GM12878 (cell line): ENCODE measurements at regions of chr4 and their contacts with region 1.

Region 1: DNA sequence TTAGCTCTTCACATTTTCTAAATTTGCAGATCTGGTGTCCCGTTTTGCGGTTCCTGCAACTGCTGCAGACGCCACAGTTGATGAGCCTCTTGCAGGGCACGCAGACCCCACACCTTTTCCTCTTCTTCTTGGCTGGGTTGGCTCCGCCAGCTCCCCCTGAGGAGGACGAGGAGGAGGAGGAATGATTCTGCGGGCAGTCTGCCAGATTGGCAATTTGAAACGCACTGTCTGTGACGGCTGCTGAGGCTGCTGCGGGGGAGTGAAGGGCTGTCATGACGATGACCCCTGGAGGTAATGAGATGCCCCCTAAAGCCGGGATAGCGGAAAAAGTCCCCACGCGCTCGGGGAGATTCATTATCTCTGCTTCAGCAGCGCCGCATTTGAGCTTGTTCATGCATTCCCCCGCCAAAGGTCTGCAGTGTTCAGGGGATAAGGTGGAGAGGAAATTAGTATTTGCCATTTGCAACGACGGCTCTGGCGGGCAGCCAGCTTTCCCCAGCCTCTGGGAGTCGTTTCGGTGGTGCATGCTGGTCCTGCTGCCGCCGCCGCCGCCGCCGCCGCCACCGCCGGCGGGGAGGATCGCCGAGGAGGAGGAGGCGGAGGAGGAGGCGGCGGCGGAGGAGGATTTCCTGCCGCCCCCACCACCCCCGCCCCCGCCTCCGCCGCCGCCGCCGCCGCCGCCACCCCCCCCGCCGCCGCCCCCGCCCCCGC is 3.8 kb downstream of the CXXC4 start:
- DNase-seq: no peak
- ATAC-seq: peak; percentile 7
- H3K4me3 ChIP-seq: peak overlapping the region; percentile 78
- H3K27ac ChIP-seq: peak overlapping the region; percentile 97
- H3K4me1 ChIP-seq: peaks cover 16% of the 10 kb centered on the region
- H3K27me3 ChIP-seq: no peaks in the 10 kb centered on the region
- CTCF ChIP-seq: no peak
- EP300 ChIP-seq: no peak
- POLR2A ChIP-seq: peak; percentile 63
- RAD21 ChIP-seq: no peak

Region 2: GRCh38 chr4:104064646-104065577 is 426.0 kb before region 1 on chr4:
- CTCF ChIA-PET with region 1: interaction called, 3 read pairs
- POLR2A ChIA-PET with region 1: no interaction called
- RAD21 ChIA-PET with region 1: no interaction called
- SMC1A ChIA-PET with region 1: no interaction called
- in situ Hi-C with region 1: no loop called
- intact Hi-C with region 1: loop called (anchors 2 kb)
- DNase-seq: peak; percentile 23
- ATAC-seq: peak; percentile 97
- H3K4me3 ChIP-seq: no peak overlapping the region
- H3K27ac ChIP-seq: no peak overlapping the region
- H3K4me1 ChIP-seq: no peaks in the 10 kb centered on the region
- H3K27me3 ChIP-seq: no peaks in the 10 kb centered on the region
- CTCF ChIP-seq: peak; percentile 56 to 74 (median 58); a peak in 5 of 6 replicates
- EP300 ChIP-seq: no peak
- POLR2A ChIP-seq: no peak
- RAD21 ChIP-seq: peak; percentile 88

Region 3: DNA sequence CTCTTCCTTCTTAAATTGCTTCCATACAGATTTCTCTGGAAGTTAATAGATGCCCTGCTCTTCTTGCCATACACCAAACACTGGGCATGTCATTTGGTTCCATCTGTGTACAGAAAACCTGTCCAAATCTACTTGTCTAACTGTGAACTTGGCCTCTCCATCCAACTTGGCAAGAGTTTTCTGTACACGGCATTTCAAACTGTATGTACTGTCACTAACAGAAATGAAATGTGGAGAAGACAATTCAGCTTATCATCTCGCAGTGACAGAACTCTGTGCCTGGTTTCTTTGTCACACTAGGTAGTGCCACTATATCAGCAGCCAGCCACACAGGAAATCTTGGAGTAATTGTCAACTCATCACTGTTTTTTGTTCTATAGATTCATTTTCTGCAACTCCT is 54.4 kb before region 1 on chr4:
- CTCF ChIA-PET with region 1: no interaction called
- POLR2A ChIA-PET with region 1: no interaction called
- RAD21 ChIA-PET with region 1: no interaction called
- SMC1A ChIA-PET with region 1: no interaction called
- in situ Hi-C with region 1: no loop called
- intact Hi-C with region 1: no loop called
- DNase-seq: no peak
- ATAC-seq: no peak
- H3K4me3 ChIP-seq: no peak overlapping the region
- H3K27ac ChIP-seq: no peak overlapping the region
- H3K4me1 ChIP-seq: no peaks in the 10 kb centered on the region
- H3K27me3 ChIP-seq: no peaks in the 10 kb centered on the region
- CTCF ChIP-seq: no peak
- EP300 ChIP-seq: no peak
- POLR2A ChIP-seq: no peak
- RAD21 ChIP-seq: no peak

Region 4: DNA sequence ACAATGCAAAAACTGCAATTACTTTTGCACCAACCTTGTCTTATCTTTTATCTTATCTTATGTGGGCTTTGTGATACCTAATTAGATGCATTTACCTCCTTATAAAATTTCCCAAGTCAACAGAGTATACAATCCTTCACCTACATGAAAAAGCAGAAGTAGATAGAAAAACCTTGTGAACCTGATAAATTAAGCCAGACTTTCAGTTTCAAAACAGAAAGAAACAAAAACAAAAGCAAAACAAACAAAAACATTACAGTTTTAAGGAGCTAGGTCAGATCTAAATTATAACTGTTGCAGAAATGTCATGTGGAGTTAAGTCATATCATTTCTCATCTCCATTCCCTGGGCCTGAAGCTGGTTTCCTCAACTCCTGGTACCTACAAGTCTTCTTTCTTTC is 28.7 kb after region 1 on chr4:
- CTCF ChIA-PET with region 1: interaction called, 3 read pairs
- POLR2A ChIA-PET with region 1: interaction called, 3 read pairs
- RAD21 ChIA-PET with region 1: interaction called, 4 read pairs
- SMC1A ChIA-PET with region 1: interaction called, 11 read pairs
- in situ Hi-C with region 1: no loop called
- intact Hi-C with region 1: no loop called
- DNase-seq: peak; percentile 28
- ATAC-seq: peak; percentile 87
- H3K4me3 ChIP-seq: no peak overlapping the region
- H3K27ac ChIP-seq: peak overlapping the region; percentile 52
- H3K4me1 ChIP-seq: peaks cover 8% of the 10 kb centered on the region; the same call in 1 of the 2 replicates
- H3K27me3 ChIP-seq: no peaks in the 10 kb centered on the region
- CTCF ChIP-seq: no peak
- EP300 ChIP-seq: no peak
- POLR2A ChIP-seq: no peak
- RAD21 ChIP-seq: no peak

Region 5: GRCh38 chr4:104559502-104559901 is 68.6 kb after region 1 on chr4:
- CTCF ChIA-PET with region 1: no interaction called
- POLR2A ChIA-PET with region 1: no interaction called
- RAD21 ChIA-PET with region 1: no interaction called
- SMC1A ChIA-PET with region 1: no interaction called
- in situ Hi-C with region 1: no loop called
- intact Hi-C with region 1: no loop called
- DNase-seq: no peak
- ATAC-seq: peak; percentile 74
- H3K4me3 ChIP-seq: no peak overlapping the region
- H3K27ac ChIP-seq: no peak overlapping the region
- H3K4me1 ChIP-seq: no peaks in the 10 kb centered on the region
- H3K27me3 ChIP-seq: no peaks in the 10 kb centered on the region
- CTCF ChIP-seq: no peak
- EP300 ChIP-seq: no peak
- POLR2A ChIP-seq: no peak
- RAD21 ChIP-seq: no peak

Region 6: GRCh38 chr4:104719539-104720230 is 228.8 kb after region 1 on chr4:
- CTCF ChIA-PET with region 1: no interaction called
- POLR2A ChIA-PET with region 1: no interaction called
- RAD21 ChIA-PET with region 1: no interaction called
- SMC1A ChIA-PET with region 1: no interaction called
- in situ Hi-C with region 1: no loop called
- intact Hi-C with region 1: no loop called
- DNase-seq: peak; percentile 49
- ATAC-seq: peak; percentile 98
- H3K4me3 ChIP-seq: no peak overlapping the region
- H3K27ac ChIP-seq: peak overlapping the region; percentile 70
- H3K4me1 ChIP-seq: peaks cover 6% of the 10 kb centered on the region
- H3K27me3 ChIP-seq: no peaks in the 10 kb centered on the region
- CTCF ChIP-seq: no peak
- EP300 ChIP-seq: peak in 1 of 2 experiments; percentile 65; a peak in 1 of 4 replicates
- POLR2A ChIP-seq: no peak
- RAD21 ChIP-seq: no peak

Region 7: DNA sequence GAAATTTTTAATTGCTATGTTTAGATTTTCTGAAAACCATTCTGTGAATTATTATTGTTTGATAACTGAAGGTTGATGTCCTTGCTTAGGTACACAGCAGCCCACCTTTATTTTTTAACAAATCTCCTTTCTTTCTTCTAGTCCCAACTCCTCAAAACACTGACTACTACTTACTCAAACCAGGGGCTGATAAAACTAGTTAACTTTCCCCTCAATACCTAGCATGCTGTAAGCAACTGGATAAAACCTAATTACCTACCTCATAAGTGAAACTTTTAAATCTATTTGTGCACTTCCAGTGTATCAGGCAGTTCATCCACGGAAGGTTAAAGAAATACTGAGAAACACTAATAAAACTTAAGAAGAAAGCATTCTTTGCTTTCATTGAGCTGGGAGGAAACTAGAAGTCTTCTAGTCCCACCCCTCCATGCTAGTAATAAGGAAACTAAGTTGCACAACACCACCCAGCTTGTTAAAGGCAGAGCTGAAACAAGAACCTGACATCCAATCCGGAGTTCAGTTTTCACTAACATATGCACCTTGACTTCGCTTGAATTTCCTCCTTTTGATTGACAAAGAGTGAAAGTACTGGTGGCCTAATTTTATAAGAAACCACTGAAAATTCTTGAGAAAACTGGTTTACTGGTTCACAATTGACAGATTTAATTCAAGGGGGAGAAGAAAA is 475.6 kb after region 1 on chr4:
- CTCF ChIA-PET with region 1: no interaction called
- POLR2A ChIA-PET with region 1: no interaction called
- RAD21 ChIA-PET with region 1: no interaction called
- SMC1A ChIA-PET with region 1: no interaction called
- in situ Hi-C with region 1: no loop called
- intact Hi-C with region 1: loop called (anchors 5 kb)
- DNase-seq: peak; percentile 96
- ATAC-seq: peak; percentile 95
- H3K4me3 ChIP-seq: peak overlapping the region; percentile 51; the same call in 1 of the 2 replicates
- H3K27ac ChIP-seq: peak overlapping the region; percentile 91
- H3K4me1 ChIP-seq: peaks cover 35% of the 10 kb centered on the region
- H3K27me3 ChIP-seq: no peaks in the 10 kb centered on the region
- CTCF ChIP-seq: no peak
- EP300 ChIP-seq: peak in 1 of 2 experiments; percentile 40; a peak in 1 of 4 replicates
- POLR2A ChIP-seq: no peak
- RAD21 ChIP-seq: peak; percentile 23; the same call in 1 of the 2 replicates